Activated naive CD4-positive, alpha-beta T cell treated with anti-CD3 and anti-CD28 coated beads, Interleukin-2, amount 10 ng/mL, durations not matched to agents 7 days and 5 days (primary cell): ENCODE measurements at regions of chr6 and their contacts with region 1.

Region 1: GRCh38 chr6:13635948-13636658 is 21.0 kb downstream of the NOL7 start:
- DNase-seq: no peak
- H3K4me3 Mint-ChIP-seq: no peak overlapping the region
- H3K27ac Mint-ChIP-seq: peak overlapping the region; percentile 45
- H3K4me1 Mint-ChIP-seq: peaks cover 34% of the 10 kb centered on the region
- H3K27me3 Mint-ChIP-seq: no peaks in the 10 kb centered on the region

Region 2: DNA sequence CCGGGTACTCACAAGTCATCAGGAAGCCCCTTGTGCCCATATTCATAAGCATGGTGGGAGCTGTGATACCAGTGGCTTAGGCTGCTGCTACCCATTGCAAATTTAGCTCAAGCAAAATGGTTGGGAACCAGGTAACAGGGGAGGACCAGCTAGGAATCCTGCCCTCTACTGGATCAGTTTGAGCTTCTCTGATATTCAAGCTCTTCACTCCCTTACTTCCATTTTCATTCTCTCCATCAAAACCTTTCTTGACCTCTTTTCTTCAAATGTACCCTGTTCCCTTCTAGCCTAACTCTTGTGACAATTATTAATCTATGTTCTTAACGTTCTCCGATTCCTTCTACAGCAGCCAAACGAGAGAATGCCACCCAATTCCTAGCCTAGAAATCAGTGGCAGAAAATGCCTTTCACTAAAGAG is 11.2 kb before region 1 on chr6:
- CTCF ChIA-PET with region 1: interaction called, 19 read pairs
- DNase-seq: peak; percentile 37
- H3K4me3 Mint-ChIP-seq: no peak overlapping the region
- H3K27ac Mint-ChIP-seq: peak overlapping the region; percentile 8
- H3K4me1 Mint-ChIP-seq: peaks cover 7% of the 10 kb centered on the region
- H3K27me3 Mint-ChIP-seq: no peaks in the 10 kb centered on the region

Region 3: GRCh38 chr6:13660893-13661292 is 24.8 kb after region 1 on chr6:
- CTCF ChIA-PET with region 1: no interaction called
- DNase-seq: no peak
- H3K4me3 Mint-ChIP-seq: no peak overlapping the region
- H3K27ac Mint-ChIP-seq: no peak overlapping the region
- H3K4me1 Mint-ChIP-seq: peaks cover 40% of the 10 kb centered on the region
- H3K27me3 Mint-ChIP-seq: no peaks in the 10 kb centered on the region